Dendritic cell treated with granulocyte-macrophage colony-stimulating factor and Interleukin-4, amounts not matched to agents 40 ng/mL and 50 ng/mL, for 4 days (primary cell): ENCODE measurements at regions of chr10 and their contacts with region 1.

Region 1: DNA sequence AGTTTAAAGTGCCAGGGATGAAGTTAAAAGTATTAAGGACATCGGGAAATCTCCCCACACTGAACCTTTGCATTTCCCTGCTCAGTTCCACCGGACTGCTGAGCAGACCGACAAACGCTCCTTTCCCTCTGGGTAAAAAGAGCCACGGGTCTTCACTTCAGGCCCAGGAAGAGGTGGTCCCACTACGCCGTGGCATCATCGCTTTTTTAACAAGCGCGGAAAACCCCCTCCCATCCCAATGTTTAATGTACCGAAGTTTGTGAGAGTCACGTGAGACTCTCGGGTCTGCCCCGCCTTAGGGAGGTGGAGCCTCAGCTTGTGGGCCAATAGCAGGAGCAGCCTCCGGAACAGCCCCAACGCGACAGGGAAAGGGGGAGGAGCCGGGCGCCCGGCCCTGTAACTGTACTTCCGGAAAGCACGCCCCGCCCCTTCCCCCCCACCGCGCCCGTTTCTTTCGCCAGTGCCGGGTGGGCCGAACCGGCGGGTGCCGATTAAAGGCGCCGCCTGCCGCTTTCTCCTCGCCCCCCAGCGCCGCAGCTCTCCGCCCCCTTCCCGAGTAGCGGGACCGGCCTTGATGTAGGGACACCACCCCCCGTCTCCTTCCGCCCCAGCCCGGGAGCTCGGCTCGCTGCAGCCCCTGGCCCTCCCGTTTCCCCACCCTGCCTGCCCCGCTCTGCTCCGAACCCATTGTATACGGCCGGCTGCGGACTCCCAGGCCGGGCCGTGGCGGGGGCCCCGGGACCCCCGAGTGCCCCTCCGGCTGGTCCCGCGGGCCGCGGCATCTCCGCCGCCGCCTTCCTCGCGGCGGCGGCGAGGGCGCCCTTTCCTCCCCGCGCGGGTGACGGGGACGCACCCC is 2.2 kb upstream of the TRIM8 start:
- H3K4me3 Mint-ChIP-seq: peak overlapping the region; percentile 91
- H3K27ac Mint-ChIP-seq: peak overlapping the region; percentile 99
- H3K4me1 Mint-ChIP-seq: peaks cover 27% of the 10 kb centered on the region
- H3K27me3 Mint-ChIP-seq: peaks cover 1% of the 10 kb centered on the region

Region 2: GRCh38 chr10:102678842-102679289 is 36.8 kb after region 1 on chr10:
- intact Hi-C with region 1: loop called (anchors 1 kb)
- H3K4me3 Mint-ChIP-seq: peak overlapping the region; percentile 63
- H3K27ac Mint-ChIP-seq: peak overlapping the region; percentile 94
- H3K4me1 Mint-ChIP-seq: peaks cover 57% of the 10 kb centered on the region
- H3K27me3 Mint-ChIP-seq: no peaks in the 10 kb centered on the region

Region 3: DNA sequence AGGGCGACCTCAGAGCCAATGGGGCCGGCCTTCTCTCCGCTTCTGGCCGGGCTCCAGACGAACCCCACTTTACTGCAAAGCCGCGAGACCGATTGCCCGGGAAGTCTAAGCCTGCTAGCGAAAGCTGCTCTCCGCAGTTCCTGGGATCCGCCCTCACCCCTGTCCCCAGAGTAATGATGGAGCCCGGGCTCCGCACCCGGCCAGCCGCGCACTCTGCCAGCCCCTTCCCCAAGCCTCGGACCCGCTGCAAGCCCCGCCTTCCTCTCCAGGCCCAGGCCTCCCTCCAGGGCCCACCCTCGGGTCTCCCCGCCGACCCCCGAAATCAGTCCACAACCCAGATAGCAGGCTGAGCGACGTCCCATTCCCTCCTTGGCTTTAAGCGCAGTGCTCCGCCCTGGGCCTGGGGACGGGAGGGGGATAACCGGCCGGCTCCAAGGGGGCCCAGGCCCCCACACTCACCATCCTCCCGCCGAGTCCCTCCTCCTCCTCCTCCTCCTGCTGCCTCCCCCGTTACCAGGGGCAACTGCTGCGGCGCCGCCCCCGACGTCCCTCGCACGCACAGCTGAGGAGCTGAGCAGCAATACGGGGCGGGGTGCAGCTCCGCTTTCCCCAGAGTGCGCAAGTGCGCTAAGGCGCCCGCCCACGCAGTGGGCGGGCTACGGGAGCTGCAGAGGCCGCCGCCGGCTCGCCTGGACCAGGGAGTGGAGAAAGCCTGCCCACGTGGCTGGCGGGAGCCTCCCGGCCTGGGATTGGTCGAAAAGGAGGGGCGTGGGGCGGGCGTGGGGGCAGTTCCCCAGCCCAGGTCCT is 71.9 kb after region 1 on chr10 and contains the start of gene ARL3:
- intact Hi-C with region 1: loop called (anchors 1 kb)
- H3K4me3 Mint-ChIP-seq: peak within 1 kb of the TSS; percentile 88
- H3K27ac Mint-ChIP-seq: peak within 1 kb of the TSS; percentile 96
- H3K4me1 Mint-ChIP-seq: peaks cover 49% of the 10 kb centered on the region
- H3K27me3 Mint-ChIP-seq: no peaks in the 10 kb centered on the region

Region 4: GRCh38 chr10:102752934-102753664 is 111.0 kb after region 1 on chr10:
- intact Hi-C with region 1: no loop called
- H3K4me3 Mint-ChIP-seq: no peak overlapping the region
- H3K27ac Mint-ChIP-seq: peak overlapping the region; percentile 56
- H3K4me1 Mint-ChIP-seq: peaks cover 49% of the 10 kb centered on the region
- H3K27me3 Mint-ChIP-seq: no peaks in the 10 kb centered on the region

Region 5: GRCh38 chr10:102888048-102888447 is 245.9 kb after region 1 on chr10:
- intact Hi-C with region 1: no loop called
- H3K4me3 Mint-ChIP-seq: no peak overlapping the region
- H3K27ac Mint-ChIP-seq: no peak overlapping the region
- H3K4me1 Mint-ChIP-seq: no peaks in the 10 kb centered on the region
- H3K27me3 Mint-ChIP-seq: peaks cover 2% of the 10 kb centered on the region

Region 6: GRCh38 chr10:103130910-103131309 is 488.8 kb after region 1 on chr10:
- intact Hi-C with region 1: no loop called
- H3K4me3 Mint-ChIP-seq: no peak overlapping the region
- H3K27ac Mint-ChIP-seq: no peak overlapping the region
- H3K4me1 Mint-ChIP-seq: peaks cover 16% of the 10 kb centered on the region
- H3K27me3 Mint-ChIP-seq: no peaks in the 10 kb centered on the region